ENCODE measurements at regions of chr6 and their contacts with region 1.

Region 1: DNA sequence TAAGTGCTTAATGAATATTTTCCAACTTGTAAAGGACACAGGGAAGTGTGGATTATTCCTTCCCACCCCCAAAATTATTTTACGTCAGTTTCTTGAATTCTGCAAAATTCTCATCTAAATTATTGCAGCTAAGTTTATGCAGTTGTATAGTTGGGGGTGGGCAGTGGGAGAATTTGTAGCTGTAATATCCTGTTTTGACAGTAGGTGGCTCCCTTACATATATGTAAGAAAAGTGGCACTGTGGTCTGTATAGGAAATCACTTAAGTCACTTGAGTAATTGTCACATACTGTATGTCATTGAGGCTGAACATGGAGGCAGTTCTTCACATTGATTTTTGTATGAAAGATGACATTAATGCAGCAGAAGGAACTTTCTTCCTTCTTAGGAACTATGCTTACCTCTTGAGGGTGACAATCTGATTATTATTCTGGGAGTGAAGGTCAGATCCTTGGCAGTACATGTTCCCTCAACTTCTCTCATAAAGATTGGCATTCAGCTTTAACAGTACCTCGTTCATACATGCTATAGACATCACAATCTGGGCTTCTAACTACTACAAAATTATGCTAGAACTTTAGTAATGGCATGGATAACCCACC is 14.7 kb upstream of the CFAP206 start:
- DNase-seq: peak in 7 of 9 donors; percentile 43 to 63 (median 62)
- ATAC-seq: peak; percentile 96
- H3K4me3 ChIP-seq: no peak overlapping the region
- H3K4me3 Mint-ChIP-seq: no peak overlapping the region
- H3K27ac ChIP-seq: no peak overlapping the region
- H3K27ac Mint-ChIP-seq: no peak overlapping the region
- H3K4me1 ChIP-seq: no peaks in the 10 kb centered on the region
- H3K4me1 Mint-ChIP-seq: peaks cover 0 to 3% (median 0%) of the 10 kb centered on the region in 7 donors
- H3K27me3 ChIP-seq: no peaks in the 10 kb centered on the region
- H3K27me3 Mint-ChIP-seq: no peaks in the 10 kb centered on the region

Region 2: GRCh38 chr6:87066449-87067333 is 326.4 kb before region 1 on chr6:
- CTCF ChIA-PET with region 1: no interaction called
- POLR2A ChIA-PET with region 1: no interaction called
- intact Hi-C with region 1: loop called in 1 of 2 experiments (anchors 5 kb)
- DNase-seq: peak in 5 of 9 donors; percentile 7 to 39 (median 16)
- ATAC-seq: no peak
- H3K4me3 ChIP-seq: no peak overlapping the region
- H3K4me3 Mint-ChIP-seq: peak overlapping the region in 2 of 10 donors; percentile 17 to 20
- H3K27ac ChIP-seq: no peak overlapping the region
- H3K27ac Mint-ChIP-seq: no peak overlapping the region
- H3K4me1 ChIP-seq: no peaks in the 10 kb centered on the region
- H3K4me1 Mint-ChIP-seq: peaks cover 0 to 6% (median 0%) of the 10 kb centered on the region in 7 donors
- H3K27me3 ChIP-seq: peaks cover 0 to 5% of the 10 kb centered on the region in 2 donors
- H3K27me3 Mint-ChIP-seq: peaks cover 11 to 38% (median 18%) of the 10 kb centered on the region in 5 donors

Region 3: GRCh38 chr6:87472525-87473418 is 79.7 kb after region 1 on chr6 and contains the start of gene SLC35A1:
- CTCF ChIA-PET with region 1: no interaction called
- POLR2A ChIA-PET with region 1: no interaction called
- intact Hi-C with region 1: loop called (anchors 1 to 2 kb)
- DNase-seq: peak; percentile 78 to 92 (median 87)
- ATAC-seq: peak; percentile 97
- H3K4me3 ChIP-seq: peak within 1 kb of the TSS; percentile 81
- H3K4me3 Mint-ChIP-seq: peak within 1 kb of the TSS; percentile 88 to 99 (median 98)
- H3K27ac ChIP-seq: peak within 1 kb of the TSS; percentile 93
- H3K27ac Mint-ChIP-seq: peak within 1 kb of the TSS; percentile 95 to 100 (median 99)
- H3K4me1 ChIP-seq: peaks cover 9 to 11% of the 10 kb centered on the region in 2 donors
- H3K4me1 Mint-ChIP-seq: peaks cover 14 to 31% (median 20%) of the 10 kb centered on the region in 7 donors
- H3K27me3 ChIP-seq: no peaks in the 10 kb centered on the region
- H3K27me3 Mint-ChIP-seq: peaks cover 2 to 14% (median 9%) of the 10 kb centered on the region in 5 donors
- total RNA-seq, gene SLC35A1: 10.4 to 23.4 (median 15.6) TPM

Region 4: DNA sequence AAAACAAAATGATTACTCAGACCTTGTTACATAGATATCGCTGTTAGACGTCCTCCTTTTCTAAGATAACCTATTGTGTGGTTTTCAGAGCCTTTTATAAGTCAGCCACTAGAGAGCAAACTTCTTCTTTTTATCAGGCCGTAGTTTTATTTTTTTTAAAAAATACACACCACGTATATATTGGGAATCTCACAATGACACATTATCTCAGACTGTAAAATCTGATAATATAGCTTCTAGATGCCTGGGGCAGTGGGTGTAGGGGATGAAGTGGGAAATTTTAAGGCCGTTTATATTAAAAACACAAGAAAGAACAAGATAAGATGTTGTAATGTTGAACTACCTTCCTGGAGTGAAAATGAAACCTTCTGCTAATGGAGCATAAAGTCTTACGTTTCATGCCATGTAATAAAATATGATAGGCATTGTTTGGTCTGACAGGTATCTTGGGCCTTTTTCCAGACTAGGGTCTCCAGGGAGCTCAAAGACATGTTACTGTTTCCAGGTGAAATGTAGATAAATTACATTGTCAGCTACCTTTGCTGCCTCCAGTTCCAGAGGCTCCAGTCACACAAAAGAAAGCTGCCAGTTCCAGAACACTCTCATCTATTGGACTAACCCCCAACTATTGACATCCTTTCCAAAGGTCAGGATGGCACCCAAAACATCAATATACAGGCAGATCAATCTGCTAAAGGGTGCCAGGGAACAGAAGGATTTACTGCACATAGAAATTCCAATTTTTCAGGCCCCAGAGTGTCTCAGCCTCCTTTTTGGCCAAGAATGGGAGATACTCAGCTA is 439.1 kb after region 1 on chr6:
- CTCF ChIA-PET with region 1: no interaction called
- POLR2A ChIA-PET with region 1: no interaction called
- intact Hi-C with region 1: loop called (anchors 1 to 10 kb)
- DNase-seq: peak in 6 of 9 donors; percentile 12 to 50 (median 29)
- ATAC-seq: peak; percentile 81
- H3K4me3 ChIP-seq: peak overlapping the region; percentile 64
- H3K4me3 Mint-ChIP-seq: peak overlapping the region; percentile 69 to 97 (median 89)
- H3K27ac ChIP-seq: peak overlapping the region; percentile 56
- H3K27ac Mint-ChIP-seq: peak overlapping the region; percentile 75 to 95 (median 88)
- H3K4me1 ChIP-seq: no peaks in the 10 kb centered on the region
- H3K4me1 Mint-ChIP-seq: peaks cover 0 to 15% (median 8%) of the 10 kb centered on the region in 7 donors
- H3K27me3 ChIP-seq: no peaks in the 10 kb centered on the region
- H3K27me3 Mint-ChIP-seq: peaks cover 0 to 12% (median 4%) of the 10 kb centered on the region in 5 donors

Region 5: GRCh38 chr6:88165844-88166492 is 772.8 kb after region 1 on chr6 and contains the start of gene CNR1:
- CTCF ChIA-PET with region 1: no interaction called
- POLR2A ChIA-PET with region 1: no interaction called
- intact Hi-C with region 1: loop called in 1 of 2 experiments (anchors 10 kb)
- DNase-seq: peak in 1 of 9 donors; percentile 25
- ATAC-seq: peak; percentile 40
- H3K4me3 ChIP-seq: no peak within 1 kb of the TSS
- H3K4me3 Mint-ChIP-seq: peak within 1 kb of the TSS; percentile 10 to 84 (median 74)
- H3K27ac ChIP-seq: no peak within 1 kb of the TSS
- H3K27ac Mint-ChIP-seq: no peak within 1 kb of the TSS
- H3K4me1 ChIP-seq: no peaks in the 10 kb centered on the region
- H3K4me1 Mint-ChIP-seq: peaks cover 5 to 19% (median 14%) of the 10 kb centered on the region in 7 donors
- H3K27me3 ChIP-seq: peaks cover 0 to 4% of the 10 kb centered on the region in 2 donors
- H3K27me3 Mint-ChIP-seq: peaks cover 69 to 81% (median 76%) of the 10 kb centered on the region in 5 donors
- total RNA-seq, gene CNR1: not detected

Region 6: GRCh38 chr6:88780714-88781389 is 1387.7 kb after region 1 on chr6:
- CTCF ChIA-PET with region 1: interaction called, 7 read pairs
- POLR2A ChIA-PET with region 1: interaction called, 3 read pairs
- intact Hi-C with region 1: loop called (anchors 1 to 2 kb)
- DNase-seq: peak; percentile 8 to 64 (median 53)
- ATAC-seq: peak; percentile 92
- H3K4me3 ChIP-seq: no peak overlapping the region
- H3K4me3 Mint-ChIP-seq: no peak overlapping the region
- H3K27ac ChIP-seq: no peak overlapping the region
- H3K27ac Mint-ChIP-seq: no peak overlapping the region
- H3K4me1 ChIP-seq: no peaks in the 10 kb centered on the region
- H3K4me1 Mint-ChIP-seq: peaks cover 0 to 10% (median 3%) of the 10 kb centered on the region in 7 donors
- H3K27me3 ChIP-seq: no peaks in the 10 kb centered on the region
- H3K27me3 Mint-ChIP-seq: no peaks in the 10 kb centered on the region

Region 7: GRCh38 chr6:88870717-88871330 is 1477.7 kb after region 1 on chr6:
- CTCF ChIA-PET with region 1: interaction called, 19 read pairs
- POLR2A ChIA-PET with region 1: no interaction called
- intact Hi-C with region 1: loop called (anchors 1 kb)
- DNase-seq: peak in 7 of 9 donors; percentile 12 to 54 (median 47)
- ATAC-seq: peak; percentile 60
- H3K4me3 ChIP-seq: no peak overlapping the region
- H3K4me3 Mint-ChIP-seq: no peak overlapping the region
- H3K27ac ChIP-seq: no peak overlapping the region
- H3K27ac Mint-ChIP-seq: no peak overlapping the region
- H3K4me1 ChIP-seq: no peaks in the 10 kb centered on the region
- H3K4me1 Mint-ChIP-seq: peaks cover 15 to 46% (median 29%) of the 10 kb centered on the region in 7 donors
- H3K27me3 ChIP-seq: no peaks in the 10 kb centered on the region
- H3K27me3 Mint-ChIP-seq: no peaks in the 10 kb centered on the region